Ovary (tissue), 10 donors: ENCODE measurements at regions of chr11 and their contacts with region 1.

Region 1: DNA sequence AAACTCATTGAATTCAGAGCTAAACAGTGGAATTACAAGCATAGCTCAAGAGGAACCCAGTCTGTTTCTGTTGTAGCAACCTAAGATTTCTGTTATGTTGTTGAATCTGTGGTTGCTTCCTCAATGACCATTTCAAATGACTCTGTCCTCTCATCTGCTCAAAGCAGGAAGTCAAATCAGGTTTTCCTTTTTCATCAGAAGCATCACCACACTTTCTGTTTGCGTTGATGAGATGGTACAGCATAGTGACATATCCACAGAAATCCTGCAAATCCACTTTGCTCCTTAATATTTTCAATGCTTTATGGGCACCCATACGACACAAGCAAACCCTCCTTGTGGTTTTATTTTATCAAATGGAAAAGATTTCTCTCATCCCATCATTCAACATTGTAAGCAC is 12.6 kb upstream of the UCP2 start:
- DNase-seq: no peak
- H3K4me3 ChIP-seq: no peak overlapping the region
- H3K27ac ChIP-seq: no peak overlapping the region
- H3K4me1 ChIP-seq: no peaks in the 10 kb centered on the region
- H3K27me3 ChIP-seq: no peaks in the 10 kb centered on the region
- CTCF ChIP-seq: no peak
- EP300 ChIP-seq: no peak
- POLR2A ChIP-seq: no peak

Region 2: DNA sequence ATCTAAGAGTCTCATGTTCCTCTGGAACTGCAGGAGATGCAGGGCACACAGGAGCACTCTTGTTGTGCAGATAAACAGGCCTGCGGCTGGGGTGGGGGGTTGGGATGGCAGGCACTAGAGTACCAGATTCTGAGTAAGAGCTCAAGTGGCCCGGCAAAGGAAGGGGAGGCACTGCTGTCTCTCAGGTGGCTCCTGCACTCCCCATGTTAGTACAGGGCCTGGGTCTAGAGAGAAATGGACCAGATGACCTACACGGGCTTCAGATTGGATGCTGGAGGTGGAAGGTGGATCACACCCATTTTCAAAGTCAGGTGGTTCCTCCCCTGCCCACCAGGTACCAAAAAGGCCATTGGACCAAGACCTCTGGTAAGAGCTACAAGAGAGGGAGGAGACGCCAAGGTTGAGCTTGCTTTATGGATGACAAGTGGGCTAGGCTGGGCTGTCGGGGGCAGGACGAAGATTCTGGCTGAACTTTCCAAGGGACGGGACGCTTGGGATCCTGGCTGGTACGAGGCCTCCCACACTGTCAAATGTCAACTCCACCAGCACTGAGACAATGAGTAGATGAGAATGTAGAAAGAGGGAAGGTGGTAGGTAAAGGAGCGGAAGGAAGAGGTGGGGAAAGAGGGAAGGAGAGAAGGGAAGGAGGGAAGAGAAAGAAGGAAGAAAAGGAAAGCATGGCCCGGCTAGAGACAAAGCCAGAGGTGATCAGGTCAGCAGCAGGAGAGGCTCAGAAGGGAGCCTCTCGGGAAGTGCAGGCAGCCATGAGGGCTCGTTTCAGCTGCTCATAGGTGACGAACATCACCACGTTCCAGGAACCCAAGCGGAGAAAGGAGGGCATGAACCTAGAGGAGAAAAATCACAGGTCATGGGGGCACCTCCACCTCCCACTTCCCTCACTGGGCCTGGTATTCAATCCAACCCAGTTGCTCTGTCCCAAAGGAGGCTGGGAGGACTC is 20.7 kb before region 1 on chr11:
- intact Hi-C with region 1: loop called in 1 of 4 experiments (anchors 2 kb)
- DNase-seq: no peak
- H3K4me3 ChIP-seq: no peak overlapping the region
- H3K27ac ChIP-seq: no peak overlapping the region
- H3K4me1 ChIP-seq: no peaks in the 10 kb centered on the region
- H3K27me3 ChIP-seq: no peaks in the 10 kb centered on the region
- CTCF ChIP-seq: no peak
- EP300 ChIP-seq: no peak
- POLR2A ChIP-seq: no peak